AG04450 (cell line): ENCODE measurements at regions of chr20 and their contacts with region 1.

Region 1: DNA sequence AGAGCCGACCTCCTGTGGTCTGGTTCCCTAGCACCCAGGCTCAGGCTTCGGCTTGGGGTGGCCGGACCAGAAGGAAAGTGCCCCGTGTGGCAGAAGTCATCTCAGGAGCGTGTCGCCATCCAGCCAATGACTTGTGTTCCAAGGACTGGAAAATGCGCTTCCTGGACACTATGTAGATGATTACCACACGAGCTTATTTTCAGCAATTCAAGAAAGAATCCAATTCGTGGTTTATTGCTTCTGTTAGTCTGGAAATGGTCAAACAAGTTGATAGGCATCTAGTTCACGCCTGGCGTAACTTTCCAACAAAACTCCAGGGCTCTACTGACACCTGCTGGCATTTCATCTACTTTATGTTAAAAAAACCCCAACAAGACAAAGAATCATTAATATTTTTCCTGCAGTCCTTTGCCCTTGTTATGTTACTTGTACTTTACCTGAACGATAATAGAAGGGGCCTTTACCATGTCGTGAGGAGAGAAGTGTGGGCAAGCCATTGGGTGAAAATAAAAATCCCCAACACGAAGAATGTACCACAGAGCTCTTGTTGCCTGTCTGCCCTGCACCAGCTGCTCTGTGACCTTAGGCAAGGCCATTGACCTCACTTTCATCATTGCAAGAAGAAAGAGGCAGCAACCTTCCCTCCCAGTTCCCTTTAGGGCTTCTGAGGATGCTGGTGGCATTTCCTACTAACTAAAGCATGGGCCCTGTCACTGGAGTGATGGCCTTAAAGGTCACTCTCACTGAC is 154.7 kb upstream of the LAMP5 start:
- DNase-seq: no peak
- H3K4me3 ChIP-seq: no peak overlapping the region
- H3K27ac ChIP-seq: no peak overlapping the region
- H3K27me3 ChIP-seq: no peaks in the 10 kb centered on the region
- CTCF ChIP-seq: peak; percentile 56

Region 2: GRCh38 chr20:8790442-8791074 is 569.2 kb before region 1 on chr20:
- CTCF ChIA-PET with region 1: interaction called, 18 read pairs
- POLR2A ChIA-PET with region 1: no interaction called
- DNase-seq: peak; percentile 15
- H3K4me3 ChIP-seq: no peak overlapping the region
- H3K27ac ChIP-seq: no peak overlapping the region
- H3K27me3 ChIP-seq: no peaks in the 10 kb centered on the region
- CTCF ChIP-seq: peak; percentile 100